CD14-positive monocyte (primary cell): ENCODE measurements at regions of chr16 and their contacts with region 1.

Region 1: DNA sequence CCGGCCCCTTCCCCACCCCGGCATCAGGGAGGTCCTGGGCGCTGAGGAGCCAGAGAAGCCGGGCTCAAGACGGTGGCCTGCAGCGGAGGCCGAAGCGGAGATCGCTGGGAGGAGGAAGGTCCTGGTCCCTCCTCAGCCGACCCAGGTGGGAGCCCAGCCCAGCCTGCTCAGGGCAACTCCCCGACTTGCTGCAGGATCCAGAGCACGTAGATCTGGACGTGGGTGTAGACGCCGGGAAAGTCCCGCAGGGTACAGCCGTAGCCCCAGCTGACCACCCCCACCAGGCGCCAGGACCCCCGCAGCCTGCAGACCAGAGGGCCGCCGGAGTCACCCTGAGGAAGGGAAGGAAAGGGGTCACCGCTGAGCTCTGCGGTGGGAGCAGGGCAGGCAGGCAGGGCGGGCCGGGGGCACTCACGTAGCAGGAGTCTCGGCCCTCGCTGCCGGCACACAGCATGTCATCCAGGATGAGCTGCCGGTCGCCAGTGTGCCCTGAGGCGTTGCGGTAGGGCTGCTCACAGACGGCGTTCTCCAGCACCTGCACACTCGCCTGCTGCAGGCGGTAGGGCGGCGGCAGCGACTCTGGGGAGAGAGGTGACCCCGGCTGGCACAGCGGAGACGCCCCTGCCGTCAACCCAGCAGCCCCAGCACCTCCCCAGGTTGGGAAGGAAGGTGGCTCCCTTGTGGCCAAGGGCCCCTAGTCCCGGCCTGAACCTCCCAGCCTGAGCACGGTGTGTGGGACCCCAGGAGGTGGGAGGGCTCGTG is 5.4 kb downstream of the TPSD1 start:
- DNase-seq: no peak
- H3K4me3 ChIP-seq: no peak overlapping the region
- H3K4me3 Mint-ChIP-seq: no peak overlapping the region
- H3K27ac ChIP-seq: no peak overlapping the region
- H3K27ac Mint-ChIP-seq: no peak overlapping the region
- H3K4me1 ChIP-seq: no peaks in the 10 kb centered on the region
- H3K4me1 Mint-ChIP-seq: peaks cover 4% of the 10 kb centered on the region
- H3K27me3 ChIP-seq: peaks cover 0 to 41% of the 10 kb centered on the region in 2 donors
- H3K27me3 Mint-ChIP-seq: peaks cover 29 to 49% (median 30%) of the 10 kb centered on the region in 3 donors
- CTCF ChIP-seq: no peak

Region 2: DNA sequence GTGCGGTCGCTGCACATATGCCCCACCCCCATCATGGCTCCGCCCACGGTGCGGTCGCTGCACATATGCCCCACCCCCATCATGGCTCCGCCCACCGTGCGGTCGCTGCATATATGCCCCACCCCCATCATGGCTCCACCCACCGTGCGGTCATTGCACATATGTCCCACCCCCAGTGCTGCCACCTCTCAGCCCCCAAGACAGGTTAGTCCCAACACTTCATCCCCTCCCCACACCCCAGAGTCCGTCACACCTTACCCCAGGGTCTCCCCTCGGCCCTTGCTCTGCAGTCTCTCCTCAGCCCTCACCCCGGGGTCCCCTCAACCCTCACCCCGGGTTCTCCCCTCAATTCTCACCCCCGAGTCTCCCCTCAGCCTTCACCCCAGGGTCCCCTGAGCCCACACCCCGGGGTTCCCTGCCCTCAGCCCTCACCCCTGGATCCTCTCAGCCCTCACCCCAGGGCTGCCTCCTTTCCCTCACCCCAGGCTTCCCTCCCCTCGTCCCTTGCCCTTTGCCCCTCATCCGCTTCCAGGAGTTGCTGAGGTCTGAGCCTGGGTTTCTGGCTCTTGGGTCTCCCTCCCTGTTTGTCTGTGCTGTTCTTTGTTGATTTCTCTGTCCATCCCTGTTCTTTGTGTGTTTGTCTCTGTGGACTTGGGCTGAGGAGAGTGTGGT is 61.8 kb before region 1 on chr16:
- intact Hi-C with region 1: no loop called
- DNase-seq: no peak
- H3K4me3 ChIP-seq: no peak overlapping the region
- H3K4me3 Mint-ChIP-seq: no peak overlapping the region
- H3K27ac ChIP-seq: no peak overlapping the region
- H3K27ac Mint-ChIP-seq: peak overlapping the region in 1 of 7 donors; percentile 12
- H3K4me1 ChIP-seq: no peaks in the 10 kb centered on the region
- H3K4me1 Mint-ChIP-seq: no peaks in the 10 kb centered on the region
- H3K27me3 ChIP-seq: no peaks in the 10 kb centered on the region
- H3K27me3 Mint-ChIP-seq: peaks cover 1 to 4% (median 2%) of the 10 kb centered on the region in 3 donors
- CTCF ChIP-seq: no peak

Region 3: DNA sequence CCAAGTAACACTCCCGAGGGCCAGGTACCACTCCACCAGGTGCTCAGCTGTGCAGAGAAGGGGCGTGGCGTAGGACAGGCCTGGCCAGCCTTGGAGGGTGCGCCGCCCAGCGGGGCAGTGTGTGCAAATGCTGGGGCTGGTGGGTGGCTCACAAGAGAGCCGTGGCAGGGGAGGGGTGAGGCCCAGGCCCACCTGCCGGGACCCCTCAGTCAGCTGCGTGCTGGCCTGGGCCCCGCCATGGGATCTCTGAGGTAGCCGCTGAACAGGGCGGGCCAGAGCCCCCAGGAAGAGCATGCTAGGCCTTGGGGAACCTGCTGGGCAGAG is 45.1 kb before region 1 on chr16:
- intact Hi-C with region 1: loop called in 1 of 2 experiments (anchors 10 kb)
- DNase-seq: no peak
- H3K4me3 ChIP-seq: no peak overlapping the region
- H3K4me3 Mint-ChIP-seq: no peak overlapping the region
- H3K27ac ChIP-seq: no peak overlapping the region
- H3K27ac Mint-ChIP-seq: no peak overlapping the region
- H3K4me1 ChIP-seq: no peaks in the 10 kb centered on the region
- H3K4me1 Mint-ChIP-seq: no peaks in the 10 kb centered on the region
- H3K27me3 ChIP-seq: no peaks in the 10 kb centered on the region
- H3K27me3 Mint-ChIP-seq: peaks cover 0 to 6% (median 0%) of the 10 kb centered on the region in 3 donors
- CTCF ChIP-seq: no peak